GM10248 (cell line): ENCODE measurements at regions of chr2 and their contacts with region 1.

Region 1: DNA sequence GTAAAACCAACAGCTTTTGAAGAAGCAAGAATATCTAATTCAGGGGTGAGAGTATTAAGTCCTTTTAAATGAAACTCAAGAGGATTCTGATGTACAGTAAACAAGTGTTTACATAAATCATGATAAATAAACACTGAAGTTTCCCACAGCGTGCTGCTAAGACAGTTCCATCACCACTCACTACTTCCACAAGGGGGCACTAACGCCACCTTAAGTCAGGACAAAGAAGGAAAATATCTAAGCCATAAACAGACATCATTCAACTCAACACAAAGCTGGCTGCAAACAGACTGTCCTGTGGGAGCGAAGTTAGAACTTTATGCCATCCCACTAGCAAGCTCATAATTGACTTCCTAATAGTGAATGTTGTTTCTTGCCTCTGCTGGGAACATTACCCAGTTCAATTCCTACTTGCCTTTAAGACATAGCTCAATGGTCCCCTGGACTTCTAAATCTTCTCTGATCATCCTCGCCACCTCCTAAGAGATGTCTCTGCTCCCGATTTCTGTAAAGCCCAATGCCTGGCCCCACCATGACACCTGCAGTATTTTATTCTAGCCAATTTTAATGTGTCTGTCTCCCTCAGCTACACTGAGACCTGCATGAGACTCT is 36.5 kb downstream of the MRPL44 start:
- DNase-seq: peak; percentile 73
- CTCF ChIP-seq: peak; percentile 82

Region 2: GRCh38 chr2:223041527-223042109 is 952.1 kb before region 1 on chr2:
- CTCF ChIA-PET with region 1: no interaction called
- POLR2A ChIA-PET with region 1: no interaction called
- DNase-seq: no peak
- CTCF ChIP-seq: no peak

Region 3: DNA sequence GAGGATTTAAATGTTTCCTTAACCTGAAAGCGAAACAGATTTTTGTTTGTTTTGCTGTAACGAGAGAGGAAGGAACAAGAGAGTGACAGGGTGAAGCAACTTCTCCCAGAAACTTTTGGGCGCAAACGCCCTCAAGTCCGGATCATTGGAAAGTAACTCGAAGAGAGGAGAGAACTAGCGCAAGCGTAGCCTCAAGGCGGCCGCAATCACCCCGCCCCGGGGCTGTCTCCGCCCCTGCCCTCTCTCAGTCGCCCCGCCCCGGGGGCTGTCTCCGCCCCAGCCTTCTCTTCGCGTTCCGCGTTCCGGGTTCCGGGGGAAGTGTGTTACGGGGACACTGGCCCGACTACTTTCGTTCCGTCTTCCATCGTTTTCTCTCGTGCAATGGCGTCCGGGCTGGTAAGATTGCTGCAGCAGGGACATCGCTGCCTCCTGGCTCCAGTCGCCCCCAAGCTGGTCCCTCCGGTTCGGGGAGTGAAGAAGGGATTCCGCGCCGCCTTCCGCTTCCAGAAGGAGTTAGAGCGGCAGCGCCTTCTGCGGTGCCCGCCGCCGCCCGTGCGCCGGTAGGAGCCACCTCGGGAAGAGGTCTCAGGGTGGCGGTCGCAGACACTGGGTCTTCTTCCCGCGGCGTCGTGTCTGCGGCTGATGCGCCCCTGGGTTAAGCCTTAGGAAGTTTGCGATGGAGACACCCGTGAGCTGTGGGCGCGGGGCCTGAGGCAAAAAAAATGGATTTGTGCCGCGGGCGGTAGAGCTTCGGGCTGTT is 36.5 kb before region 1 on chr2 and contains the start of gene MRPL44:
- CTCF ChIA-PET with region 1: interaction called, 11 read pairs
- POLR2A ChIA-PET with region 1: no interaction called
- DNase-seq: peak; percentile 93
- CTCF ChIP-seq: no peak

Region 4: DNA sequence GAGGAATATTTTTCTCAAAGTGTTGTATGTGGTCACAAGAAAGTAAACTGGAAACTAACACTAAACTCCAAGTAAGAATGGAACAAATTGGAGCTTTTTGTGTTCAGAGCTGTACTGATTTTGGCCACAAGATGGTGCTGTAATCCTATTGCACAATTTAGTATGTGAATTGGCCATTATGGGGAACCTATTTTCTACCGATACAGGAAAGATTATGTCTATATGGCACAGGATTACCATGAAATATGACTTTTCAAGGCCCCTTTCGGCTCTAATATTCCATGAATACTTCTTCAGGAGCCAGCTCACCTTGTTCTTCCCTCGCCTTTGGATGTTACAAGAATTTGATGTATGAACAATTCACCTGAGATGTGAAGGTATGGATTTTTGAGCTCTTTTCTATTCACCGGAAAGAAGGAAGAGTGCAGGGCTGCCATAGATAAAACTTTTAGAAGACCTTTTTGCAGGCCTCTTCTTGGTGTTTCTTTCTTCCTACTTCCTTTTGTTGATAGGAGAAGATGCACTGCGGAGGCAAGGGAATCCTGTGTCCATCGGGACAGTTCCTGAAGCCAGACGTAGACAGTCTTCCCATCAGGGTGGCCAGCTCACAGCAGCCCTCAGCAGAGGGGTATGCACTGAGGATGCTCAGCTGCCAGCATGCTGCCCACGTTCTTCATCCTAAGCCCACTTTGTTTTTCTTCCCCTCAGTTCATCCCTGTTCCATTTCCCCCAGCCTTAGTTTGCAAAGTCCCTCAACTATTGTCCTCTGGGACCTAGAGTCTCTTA is 23.2 kb before region 1 on chr2:
- CTCF ChIA-PET with region 1: interaction called, 136 read pairs
- POLR2A ChIA-PET with region 1: no interaction called
- DNase-seq: peak; percentile 39
- CTCF ChIP-seq: peak; percentile 75

Region 5: DNA sequence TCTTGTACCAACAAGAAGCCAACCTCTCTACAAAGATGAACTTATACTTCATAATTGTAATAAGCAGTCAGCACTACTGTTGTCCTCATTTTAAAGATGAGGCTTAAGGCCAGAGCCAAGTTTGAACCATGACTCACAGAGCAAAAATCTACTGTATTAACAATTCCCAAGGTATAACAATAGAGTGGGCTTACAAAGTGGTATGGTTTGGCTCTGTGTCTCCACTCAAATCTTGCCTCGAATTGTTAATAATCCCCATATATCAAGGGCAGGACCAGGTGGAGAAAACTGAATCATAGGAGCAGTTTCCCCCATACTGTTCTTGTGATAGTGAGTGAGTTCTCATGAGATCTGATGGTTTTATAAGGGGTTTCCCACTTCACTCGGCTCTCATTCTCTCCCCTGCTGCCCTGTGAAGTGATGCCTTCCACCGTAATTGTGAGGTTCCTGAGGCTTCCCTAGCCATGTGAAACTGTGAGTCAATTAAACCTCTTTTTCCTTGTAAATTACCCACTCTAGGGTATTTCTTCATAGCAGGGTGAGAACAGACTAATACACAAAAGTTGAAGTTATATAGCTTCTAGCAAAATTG is 17.0 kb before region 1 on chr2:
- CTCF ChIA-PET with region 1: interaction called, 136 read pairs
- POLR2A ChIA-PET with region 1: no interaction called
- DNase-seq: no peak
- CTCF ChIP-seq: no peak

Region 6: DNA sequence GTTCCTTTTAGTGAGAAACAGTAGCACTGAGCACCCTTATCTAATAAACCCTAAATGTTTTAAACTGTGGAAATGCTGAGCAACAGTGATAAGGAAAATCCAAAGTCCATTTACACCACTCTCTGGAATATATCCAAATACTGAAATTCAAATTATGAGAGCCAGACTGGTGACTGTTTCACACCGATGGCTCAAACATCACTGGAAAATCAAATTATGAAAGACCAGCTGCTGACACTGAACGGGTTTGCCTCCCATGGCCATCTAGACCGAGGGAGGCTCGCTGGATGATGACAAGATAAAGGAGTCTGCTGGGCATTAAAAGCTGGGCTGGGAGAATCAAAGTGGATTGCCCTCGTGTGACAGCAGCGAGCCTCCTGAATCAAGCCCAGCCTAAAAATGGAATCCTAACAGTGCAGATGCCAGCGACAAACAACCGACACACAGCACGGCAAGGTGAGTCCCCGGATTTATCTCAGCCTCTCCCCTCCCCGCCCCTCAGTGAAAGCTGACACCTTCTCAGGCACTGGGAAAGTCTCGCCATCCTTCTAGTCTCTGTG is 15.1 kb after region 1 on chr2:
- CTCF ChIA-PET with region 1: interaction called, 78 read pairs
- POLR2A ChIA-PET with region 1: no interaction called
- DNase-seq: no peak
- CTCF ChIP-seq: no peak

Region 7: DNA sequence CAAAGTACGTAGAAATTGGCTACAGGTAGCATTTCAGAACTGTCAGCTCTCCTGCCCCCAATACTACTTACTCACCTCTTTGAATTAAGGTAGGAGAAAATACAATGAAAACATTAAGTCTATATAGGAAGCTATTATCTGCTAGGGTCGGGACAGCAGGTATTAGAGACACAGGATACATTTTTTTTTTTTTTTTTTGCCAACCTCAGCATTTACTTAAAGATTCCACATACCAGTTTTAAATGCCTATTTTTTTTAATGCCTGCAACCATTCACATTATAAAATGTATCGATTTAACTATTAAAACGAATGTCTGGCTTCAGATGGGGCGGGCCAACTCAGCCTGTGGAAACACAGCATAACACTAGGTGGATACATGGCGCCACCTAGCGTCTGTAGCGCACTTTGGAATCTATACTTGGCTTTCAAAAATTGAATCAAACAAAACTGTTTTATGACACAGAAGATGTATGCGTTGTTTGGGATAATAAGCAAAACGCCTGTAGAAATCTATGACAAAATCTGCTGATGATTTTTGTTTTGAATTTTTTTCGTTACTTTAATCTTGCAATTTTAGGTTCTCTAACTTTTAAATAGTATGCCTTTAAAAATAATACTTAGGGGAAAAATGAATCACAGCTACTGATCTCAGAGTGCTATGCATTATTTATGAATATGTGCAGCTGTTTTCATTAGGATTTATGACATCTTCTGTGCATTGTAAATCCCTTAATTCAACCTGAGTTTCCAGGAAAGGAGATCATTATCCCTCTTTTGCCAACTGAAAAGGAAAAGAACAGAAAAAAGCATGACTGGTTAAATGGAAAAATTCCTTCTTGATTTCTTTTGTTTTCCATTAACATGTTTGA is 1666.8 kb after region 1 on chr2:
- CTCF ChIA-PET with region 1: no interaction called
- POLR2A ChIA-PET with region 1: no interaction called
- DNase-seq: peak; percentile 61
- CTCF ChIP-seq: peak; percentile 87